ENCODE measurements at regions of chr17 and their contacts with region 1.

Region 1: GRCh38 chr17:38868817-38869525 is 887 bp upstream of the LASP1 start:
- DNase-seq: peak; percentile 54 to 99
- H3K4me3 ChIP-seq: peak overlapping the region; percentile 88 to 100 (median 98)
- H3K27ac ChIP-seq: peak overlapping the region; percentile 81
- H3K4me1 ChIP-seq: peaks cover 0 to 24% (median 13%) of the 10 kb centered on the region in 4 experiments; a peak in 6 of 7 replicates
- H3K27me3 ChIP-seq: no peaks in the 10 kb centered on the region
- CTCF ChIP-seq: peak; percentile 38 to 52 (median 41)
- EP300 ChIP-seq: no peak
- POLR2A ChIP-seq: peak in 1 of 2 experiments; percentile 27; a peak in 2 of 3 replicates
- RAD21 ChIP-seq: no peak; a peak in 1 of 4 replicates

Region 2: GRCh38 chr17:38879878-38880682 is 11.1 kb after region 1 on chr17:
- CTCF ChIA-PET with region 1: interaction called, 16 read pairs
- POLR2A ChIA-PET with region 1: interaction called, 143 read pairs
- DNase-seq: peak; percentile 79 to 91
- H3K4me3 ChIP-seq: peak overlapping the region in 3 of 4 experiments; percentile 7 to 43 (median 20); a peak in 5 of 8 replicates
- H3K27ac ChIP-seq: peak overlapping the region; percentile 72; the same call in 1 of the 2 replicates
- H3K4me1 ChIP-seq: peaks cover 31 to 51% (median 37%) of the 10 kb centered on the region in 4 experiments
- H3K27me3 ChIP-seq: no peaks in the 10 kb centered on the region
- CTCF ChIP-seq: no peak
- EP300 ChIP-seq: peak in 1 of 2 experiments; percentile 42; a peak in 1 of 3 replicates
- POLR2A ChIP-seq: no peak
- RAD21 ChIP-seq: peak in 1 of 2 experiments; percentile 5; a peak in 1 of 4 replicates

Region 3: GRCh38 chr17:38893607-38894006 is 24.6 kb after region 1 on chr17:
- CTCF ChIA-PET with region 1: interaction called, 4 read pairs
- POLR2A ChIA-PET with region 1: interaction called, 143 read pairs
- DNase-seq: no peak
- H3K4me3 ChIP-seq: no peak overlapping the region
- H3K27ac ChIP-seq: no peak overlapping the region
- H3K4me1 ChIP-seq: peaks cover 0 to 7% (median 3%) of the 10 kb centered on the region in 4 experiments; a peak in 5 of 7 replicates
- H3K27me3 ChIP-seq: no peaks in the 10 kb centered on the region
- CTCF ChIP-seq: no peak
- EP300 ChIP-seq: no peak
- POLR2A ChIP-seq: no peak
- RAD21 ChIP-seq: no peak

Region 4: DNA sequence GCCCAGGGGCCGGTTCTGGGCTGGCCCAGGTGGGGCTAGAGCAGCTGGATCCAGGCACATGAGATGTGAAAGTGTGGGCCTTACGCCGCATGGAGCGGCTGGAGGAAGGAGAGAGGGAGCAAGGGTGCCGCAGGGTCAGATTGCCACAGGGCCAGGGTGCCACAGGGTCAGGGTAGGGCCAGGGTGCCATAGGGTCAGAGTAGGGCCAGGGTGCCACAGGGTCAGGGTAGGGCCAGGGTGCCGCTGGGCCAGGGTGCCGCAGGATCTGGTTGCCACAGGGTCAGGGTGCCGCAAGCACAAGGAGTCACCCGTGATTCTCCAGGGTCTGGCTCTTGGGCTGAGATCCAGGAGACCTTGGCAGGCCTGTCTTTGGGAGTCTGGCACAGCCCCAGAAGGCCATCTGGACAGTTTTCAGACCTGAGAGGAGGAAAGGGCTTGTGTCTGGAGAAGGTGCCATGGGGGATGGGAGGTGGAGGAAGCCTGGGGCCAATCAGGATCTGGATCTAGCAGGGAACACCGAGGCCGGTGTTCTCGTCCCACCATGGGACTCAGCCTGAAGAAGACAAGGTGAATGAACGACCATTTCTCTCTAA is 43.3 kb after region 1 on chr17:
- CTCF ChIA-PET with region 1: interaction called, 11 read pairs
- POLR2A ChIA-PET with region 1: interaction called, 98 read pairs
- DNase-seq: no peak
- H3K4me3 ChIP-seq: no peak overlapping the region
- H3K27ac ChIP-seq: no peak overlapping the region
- H3K4me1 ChIP-seq: peaks cover 0 to 6% (median 2%) of the 10 kb centered on the region in 4 experiments; a peak in 2 of 7 replicates
- H3K27me3 ChIP-seq: no peaks in the 10 kb centered on the region
- CTCF ChIP-seq: no peak
- EP300 ChIP-seq: no peak
- POLR2A ChIP-seq: no peak
- RAD21 ChIP-seq: no peak